ENCODE measurements at regions of chr10 and their contacts with region 1.

Region 1: GRCh38 chr10:78579995-78580394 is 488.8 kb upstream of the ZMIZ1 start:
- DNase-seq: no peak
- H3K4me3 Mint-ChIP-seq: no peak overlapping the region
- H3K27ac Mint-ChIP-seq: no peak overlapping the region
- H3K4me1 Mint-ChIP-seq: peaks cover 15% of the 10 kb centered on the region
- H3K27me3 Mint-ChIP-seq: no peaks in the 10 kb centered on the region

Region 2: GRCh38 chr10:78510566-78511323 is 69.2 kb before region 1 on chr10:
- CTCF ChIA-PET with region 1: no interaction called
- intact Hi-C with region 1: no loop called
- DNase-seq: no peak
- H3K4me3 Mint-ChIP-seq: no peak overlapping the region
- H3K27ac Mint-ChIP-seq: no peak overlapping the region
- H3K4me1 Mint-ChIP-seq: no peaks in the 10 kb centered on the region
- H3K27me3 Mint-ChIP-seq: no peaks in the 10 kb centered on the region

Region 3: DNA sequence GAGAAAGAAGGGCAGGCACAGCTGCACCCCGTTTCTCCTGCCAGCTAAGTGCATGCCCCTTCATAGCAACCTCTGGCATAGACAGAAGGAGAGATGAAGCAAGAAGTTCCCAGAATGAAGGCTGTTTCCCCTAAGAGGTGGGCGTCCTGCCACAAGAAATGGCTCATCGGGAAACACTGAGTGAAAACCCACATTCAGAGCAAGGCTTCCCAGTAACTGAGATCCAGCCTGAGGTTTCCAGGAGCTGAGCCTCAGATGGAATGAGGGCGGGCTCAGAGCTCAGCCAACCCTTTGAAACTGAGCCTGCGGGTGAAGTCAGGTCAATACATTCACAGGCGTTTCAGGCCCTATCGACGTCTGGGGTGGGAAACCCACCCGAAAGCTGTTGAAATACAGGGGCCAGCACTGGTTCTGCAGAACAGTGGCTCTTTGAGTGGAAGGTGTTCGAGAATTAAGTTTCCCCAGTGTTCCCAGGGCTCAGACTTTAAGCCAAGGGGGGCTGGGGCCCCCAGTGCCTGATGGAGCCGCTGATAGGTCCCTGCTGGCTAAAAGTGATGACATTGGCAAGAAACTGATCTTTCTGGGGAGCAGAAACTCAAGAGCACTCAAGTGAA is 36.1 kb before region 1 on chr10:
- CTCF ChIA-PET with region 1: no interaction called
- intact Hi-C with region 1: loop called (anchors 5 kb)
- DNase-seq: no peak
- H3K4me3 Mint-ChIP-seq: no peak overlapping the region
- H3K27ac Mint-ChIP-seq: no peak overlapping the region
- H3K4me1 Mint-ChIP-seq: peaks cover 17% of the 10 kb centered on the region
- H3K27me3 Mint-ChIP-seq: peaks cover 10% of the 10 kb centered on the region

Region 4: DNA sequence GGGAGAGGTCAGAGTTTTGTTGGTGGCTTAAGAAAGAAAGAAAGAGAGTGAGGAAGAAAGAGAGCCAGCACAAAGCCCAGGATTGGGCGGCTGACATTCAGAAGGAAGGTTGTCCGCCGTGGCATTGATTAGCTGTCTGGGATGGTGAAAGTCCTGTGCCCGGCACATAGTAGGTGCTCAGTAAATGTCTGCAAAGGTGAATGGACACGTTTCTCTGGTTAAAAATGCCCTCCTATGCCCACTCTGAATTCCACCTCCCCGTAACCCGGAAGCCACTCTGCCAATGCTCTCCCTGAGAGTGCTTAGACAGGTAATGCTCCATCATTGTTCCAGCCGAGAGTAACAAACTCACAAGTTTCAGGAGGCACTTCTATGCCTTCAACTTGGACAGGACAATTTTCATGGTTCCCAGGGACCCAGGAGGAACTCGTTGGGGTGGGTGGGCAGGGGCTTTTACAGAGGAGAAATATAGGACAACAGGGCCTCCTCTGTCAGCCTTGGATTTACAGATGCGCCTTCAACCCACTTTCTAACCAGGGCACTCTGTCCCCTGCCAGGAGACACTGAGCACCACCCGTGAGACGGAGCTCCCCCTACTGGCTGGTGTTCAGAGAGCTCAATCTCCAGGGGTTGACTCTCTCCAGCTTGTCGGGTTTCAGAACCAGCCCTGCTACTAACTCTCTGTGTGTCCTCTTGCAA is 77.3 kb after region 1 on chr10:
- CTCF ChIA-PET with region 1: no interaction called
- intact Hi-C with region 1: no loop called
- DNase-seq: peak; percentile 85
- H3K4me3 Mint-ChIP-seq: no peak overlapping the region
- H3K27ac Mint-ChIP-seq: no peak overlapping the region
- H3K4me1 Mint-ChIP-seq: no peaks in the 10 kb centered on the region
- H3K27me3 Mint-ChIP-seq: peaks cover 9% of the 10 kb centered on the region

Region 5: GRCh38 chr10:79322616-79323543 is 742.9 kb after region 1 on chr10:
- CTCF ChIA-PET with region 1: no interaction called
- intact Hi-C with region 1: loop called (anchors 10 kb)
- DNase-seq: peak; percentile 95
- H3K4me3 Mint-ChIP-seq: peak overlapping the region; percentile 33
- H3K27ac Mint-ChIP-seq: peak overlapping the region; percentile 92
- H3K4me1 Mint-ChIP-seq: peaks cover 68% of the 10 kb centered on the region
- H3K27me3 Mint-ChIP-seq: no peaks in the 10 kb centered on the region

Measured in activated naive CD4-positive, alpha-beta T cell treated with anti-CD3 and anti-CD28 coated beads for 36 hours (primary cell).